H1 (cell line): ENCODE measurements at regions of chr5 and their contacts with region 1.

Region 1: DNA sequence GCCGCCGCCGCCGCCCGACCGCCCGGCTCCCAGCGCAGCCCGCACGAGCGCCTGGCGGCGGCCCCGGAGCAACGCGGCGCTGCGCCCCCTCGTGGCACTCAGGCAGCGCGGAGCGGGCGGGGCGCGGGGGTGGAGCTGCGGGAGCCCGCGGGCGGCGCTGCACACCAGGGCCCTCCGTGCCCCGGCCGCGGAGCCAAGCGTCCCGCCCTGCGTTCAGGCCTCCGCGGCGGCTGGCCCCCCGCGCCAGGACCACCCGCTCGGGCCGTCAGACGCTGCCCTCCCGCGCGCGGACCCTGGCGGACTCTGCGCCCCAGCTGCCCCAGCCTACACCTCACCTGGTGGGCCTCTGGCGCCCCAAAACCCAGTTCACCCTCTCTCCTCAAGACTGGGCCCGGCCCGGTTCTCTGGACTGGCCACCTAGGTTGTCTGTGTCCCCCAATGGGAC is at the start of gene RASGEF1C:
- DNase-seq: peak in 1 of 2 experiments; percentile 82
- H3K4me3 ChIP-seq: peak within 1 kb of the TSS; percentile 30 to 58 (median 34); a peak in 7 of 8 replicates
- H3K27ac ChIP-seq: no peak within 1 kb of the TSS
- H3K4me1 ChIP-seq: peaks cover 0 to 8% (median 4%) of the 10 kb centered on the region in 4 experiments; a peak in 4 of 7 replicates
- H3K27me3 ChIP-seq: peaks cover 8 to 31% (median 21%) of the 10 kb centered on the region in 4 experiments; a peak in 6 of 7 replicates
- CTCF ChIP-seq: peak in 2 of 3 experiments; percentile 63 to 91; a peak in 3 of 4 replicates
- EP300 ChIP-seq: no peak
- POLR2A ChIP-seq: no peak
- RAD21 ChIP-seq: peak in 1 of 2 experiments; percentile 51; a peak in 2 of 4 replicates
- total RNA-seq, gene RASGEF1C: 0.46 and 0.61 TPM in 2 replicates

Region 2: GRCh38 chr5:180126726-180127681 is 82.2 kb before region 1 on chr5:
- CTCF ChIA-PET with region 1: interaction called, 15 read pairs
- POLR2A ChIA-PET with region 1: no interaction called
- DNase-seq: peak in 1 of 2 experiments; percentile 87
- H3K4me3 ChIP-seq: no peak overlapping the region; a peak in 1 of 8 replicates
- H3K27ac ChIP-seq: no peak overlapping the region
- H3K4me1 ChIP-seq: no peaks in the 10 kb centered on the region
- H3K27me3 ChIP-seq: no peaks in the 10 kb centered on the region; a peak in 1 of 7 replicates
- CTCF ChIP-seq: peak in 2 of 3 experiments; percentile 82 to 87; a peak in 3 of 4 replicates
- EP300 ChIP-seq: no peak
- POLR2A ChIP-seq: no peak
- RAD21 ChIP-seq: peak; percentile 81 to 87

Region 3: GRCh38 chr5:180155365-180155926 is 53.7 kb before region 1 on chr5:
- CTCF ChIA-PET with region 1: no interaction called
- POLR2A ChIA-PET with region 1: no interaction called
- DNase-seq: peak in 1 of 2 experiments; percentile 33
- H3K4me3 ChIP-seq: no peak overlapping the region
- H3K27ac ChIP-seq: no peak overlapping the region
- H3K4me1 ChIP-seq: no peaks in the 10 kb centered on the region; a peak in 1 of 7 replicates
- H3K27me3 ChIP-seq: no peaks in the 10 kb centered on the region
- CTCF ChIP-seq: no peak
- EP300 ChIP-seq: no peak
- POLR2A ChIP-seq: no peak
- RAD21 ChIP-seq: no peak